KBM-7 (cell line): ENCODE measurements at regions of chrX and their contacts with region 1.

Region 1: GRCh38 chrX:130039847-130040246 is 57.4 kb downstream of the BCORL1 start:
- DNase-seq: no peak

Region 2: GRCh38 chrX:129925305-129926092 is 114.3 kb before region 1 on chrX:
- in situ Hi-C with region 1: loop called (anchors 10 kb)
- DNase-seq: peak; percentile 87

Region 3: GRCh38 chrX:130516123-130516522 is 476.3 kb after region 1 on chrX:
- in situ Hi-C with region 1: no loop called
- DNase-seq: no peak